CD8-positive, alpha-beta T cell (primary cell): ENCODE measurements at regions of chr16 and their contacts with region 1.

Region 1: DNA sequence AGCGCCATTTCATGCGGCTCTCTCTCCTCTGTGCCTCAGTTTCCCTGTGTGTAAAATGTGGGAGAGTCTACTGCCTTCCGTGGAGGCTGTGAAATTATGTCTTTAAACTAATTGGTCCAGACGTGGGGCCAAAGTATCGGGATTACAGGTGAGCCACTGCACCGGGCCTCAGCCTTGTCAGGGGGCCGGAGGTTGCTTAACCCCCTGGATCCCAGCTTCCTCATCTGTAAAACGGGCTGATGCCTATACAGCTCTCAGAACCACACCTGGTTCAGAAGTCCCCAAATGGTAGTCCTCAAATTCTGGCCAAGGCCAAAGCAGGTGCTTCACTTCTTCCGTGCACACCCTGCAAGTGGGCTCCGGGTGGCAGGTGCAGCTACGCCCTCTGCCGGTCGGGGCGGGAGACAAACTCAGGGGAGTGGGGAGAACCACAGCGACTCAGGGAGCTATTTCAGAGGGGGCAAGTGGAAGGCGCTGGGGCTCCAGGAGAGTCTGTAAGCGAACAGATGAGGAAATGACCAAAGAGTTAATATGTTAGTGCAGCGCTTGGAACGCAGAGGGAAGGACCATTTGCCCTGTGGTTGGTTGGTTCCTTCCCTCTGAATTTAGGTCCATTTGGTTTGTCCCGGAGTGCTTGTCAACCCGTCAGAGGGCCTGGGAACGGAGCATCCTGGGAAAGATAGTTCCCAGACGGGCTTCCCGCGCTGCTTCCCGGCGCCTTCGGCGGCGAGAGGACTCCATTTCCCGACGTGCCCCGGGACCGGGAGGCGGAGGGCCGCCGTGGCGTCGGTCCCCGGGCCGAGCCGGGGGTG is at the start of gene MGRN1:
- DNase-seq: peak; percentile 84 to 96 (median 92)
- ATAC-seq: peak; percentile 94
- H3K4me3 ChIP-seq: peak within 1 kb of the TSS; percentile 64 to 86
- H3K4me3 Mint-ChIP-seq: peak within 1 kb of the TSS; percentile 93
- H3K27ac ChIP-seq: peak within 1 kb of the TSS; percentile 92 to 98
- H3K27ac Mint-ChIP-seq: peak within 1 kb of the TSS; percentile 99
- H3K4me1 ChIP-seq: peaks cover 27% of the 10 kb centered on the region
- H3K4me1 Mint-ChIP-seq: peaks cover 30% of the 10 kb centered on the region
- H3K27me3 ChIP-seq: no peaks in the 10 kb centered on the region
- H3K27me3 Mint-ChIP-seq: no peaks in the 10 kb centered on the region
- CTCF ChIP-seq: peak; percentile 95
- total RNA-seq, gene MGRN1: 46.5 to 48.6 TPM

Region 2: DNA sequence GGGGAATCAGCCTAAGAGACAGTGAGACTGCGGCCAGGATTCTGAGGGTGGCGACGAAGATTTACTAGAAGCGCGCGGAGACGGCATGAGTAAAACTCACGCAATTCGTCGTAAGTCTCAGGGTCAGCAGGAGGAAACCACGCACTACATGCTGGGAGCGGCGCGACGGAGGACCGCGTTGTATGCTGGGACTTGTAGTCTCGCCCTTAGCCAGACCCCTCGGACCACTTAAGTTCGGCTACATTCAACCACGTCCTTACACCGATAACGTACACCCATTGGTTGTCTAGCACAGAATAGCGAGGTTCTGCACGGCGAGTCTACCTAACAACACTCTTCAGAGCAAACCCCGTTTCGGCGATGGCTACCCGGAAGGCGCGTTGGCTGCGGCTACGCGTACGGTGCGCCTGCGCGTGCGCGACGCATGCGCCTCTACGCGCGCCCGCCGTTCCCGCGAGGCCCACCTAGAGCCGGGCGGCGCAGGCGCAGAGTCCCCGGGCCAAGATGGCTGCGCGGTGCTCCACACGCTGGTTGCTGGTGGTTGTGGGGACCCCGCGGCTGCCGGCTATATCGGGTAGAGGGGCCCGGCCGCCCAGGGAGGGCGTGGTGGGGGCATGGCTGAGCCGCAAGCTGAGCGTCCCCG is 198.7 kb before region 1 on chr16 and contains the start of gene DNAJA3:
- CTCF ChIA-PET with region 1: no interaction called
- POLR2A ChIA-PET with region 1: no interaction called
- intact Hi-C with region 1: loop called in 1 of 2 experiments (anchors 1 kb)
- DNase-seq: peak; percentile 80 to 97 (median 92)
- ATAC-seq: peak; percentile 84
- H3K4me3 ChIP-seq: peak within 1 kb of the TSS; percentile 83 to 100
- H3K4me3 Mint-ChIP-seq: peak within 1 kb of the TSS; percentile 96
- H3K27ac ChIP-seq: peak within 1 kb of the TSS; percentile 96 to 100
- H3K27ac Mint-ChIP-seq: peak within 1 kb of the TSS; percentile 99
- H3K4me1 ChIP-seq: peaks cover 23% of the 10 kb centered on the region
- H3K4me1 Mint-ChIP-seq: peaks cover 32% of the 10 kb centered on the region
- H3K27me3 ChIP-seq: no peaks in the 10 kb centered on the region
- H3K27me3 Mint-ChIP-seq: no peaks in the 10 kb centered on the region
- CTCF ChIP-seq: no peak
- total RNA-seq, gene DNAJA3: 13.8 to 17.4 TPM

Region 3: GRCh38 chr16:4603624-4604170 is 20.5 kb before region 1 on chr16:
- CTCF ChIA-PET with region 1: no interaction called
- POLR2A ChIA-PET with region 1: no interaction called
- intact Hi-C with region 1: no loop called
- DNase-seq: no peak
- ATAC-seq: no peak
- H3K4me3 ChIP-seq: no peak overlapping the region
- H3K4me3 Mint-ChIP-seq: no peak overlapping the region
- H3K27ac ChIP-seq: no peak overlapping the region
- H3K27ac Mint-ChIP-seq: no peak overlapping the region
- H3K4me1 ChIP-seq: no peaks in the 10 kb centered on the region
- H3K4me1 Mint-ChIP-seq: no peaks in the 10 kb centered on the region
- H3K27me3 ChIP-seq: no peaks in the 10 kb centered on the region
- H3K27me3 Mint-ChIP-seq: peaks cover 2% of the 10 kb centered on the region
- CTCF ChIP-seq: no peak

Region 4: DNA sequence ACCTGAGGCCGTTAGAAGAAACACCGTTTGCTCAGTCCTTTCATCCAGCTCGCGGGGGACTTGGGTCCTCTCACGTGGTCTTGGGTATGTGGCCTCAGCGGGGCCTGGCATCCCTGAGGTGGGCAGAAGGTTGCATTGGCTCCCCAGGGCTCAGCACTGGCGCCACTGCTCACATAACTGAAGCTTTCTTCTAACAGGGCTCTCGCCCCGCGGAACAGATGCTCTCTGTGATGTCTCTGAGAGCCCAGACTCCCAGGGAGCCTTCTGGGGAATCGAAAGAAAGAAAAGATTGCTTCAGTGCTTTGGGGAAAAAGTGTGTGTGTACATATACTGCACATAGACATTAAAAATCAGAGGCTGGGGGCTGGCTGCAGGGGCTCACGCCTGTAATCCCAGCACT is 10.5 kb after region 1 on chr16:
- CTCF ChIA-PET with region 1: interaction called, 13 read pairs
- POLR2A ChIA-PET with region 1: no interaction called
- intact Hi-C with region 1: no loop called
- DNase-seq: no peak
- ATAC-seq: no peak
- H3K4me3 ChIP-seq: no peak overlapping the region
- H3K4me3 Mint-ChIP-seq: no peak overlapping the region
- H3K27ac ChIP-seq: no peak overlapping the region
- H3K27ac Mint-ChIP-seq: peak overlapping the region; percentile 32
- H3K4me1 ChIP-seq: peaks cover under 1% of the 10 kb centered on the region
- H3K4me1 Mint-ChIP-seq: peaks cover 20% of the 10 kb centered on the region
- H3K27me3 ChIP-seq: no peaks in the 10 kb centered on the region
- H3K27me3 Mint-ChIP-seq: no peaks in the 10 kb centered on the region
- CTCF ChIP-seq: no peak

Region 5: GRCh38 chr16:4693296-4693955 is 69.2 kb after region 1 on chr16 and contains the start of gene NUDT16L1:
- CTCF ChIA-PET with region 1: interaction called, 10 read pairs
- POLR2A ChIA-PET with region 1: interaction called, 8 read pairs
- intact Hi-C with region 1: loop called in 1 of 2 experiments (anchors 1 kb)
- DNase-seq: peak; percentile 94 to 99 (median 97)
- ATAC-seq: peak; percentile 90
- H3K4me3 ChIP-seq: peak within 1 kb of the TSS; percentile 85 to 97
- H3K4me3 Mint-ChIP-seq: peak within 1 kb of the TSS; percentile 88
- H3K27ac ChIP-seq: peak within 1 kb of the TSS; percentile 68 to 93
- H3K27ac Mint-ChIP-seq: peak within 1 kb of the TSS; percentile 89
- H3K4me1 ChIP-seq: peaks cover 30% of the 10 kb centered on the region
- H3K4me1 Mint-ChIP-seq: peaks cover 13% of the 10 kb centered on the region
- H3K27me3 ChIP-seq: no peaks in the 10 kb centered on the region
- H3K27me3 Mint-ChIP-seq: no peaks in the 10 kb centered on the region
- CTCF ChIP-seq: no peak
- total RNA-seq, gene NUDT16L1: 72.9 to 76.5 TPM